ENCODE measurements at regions of chr18 and their contacts with region 1.

Region 1: DNA sequence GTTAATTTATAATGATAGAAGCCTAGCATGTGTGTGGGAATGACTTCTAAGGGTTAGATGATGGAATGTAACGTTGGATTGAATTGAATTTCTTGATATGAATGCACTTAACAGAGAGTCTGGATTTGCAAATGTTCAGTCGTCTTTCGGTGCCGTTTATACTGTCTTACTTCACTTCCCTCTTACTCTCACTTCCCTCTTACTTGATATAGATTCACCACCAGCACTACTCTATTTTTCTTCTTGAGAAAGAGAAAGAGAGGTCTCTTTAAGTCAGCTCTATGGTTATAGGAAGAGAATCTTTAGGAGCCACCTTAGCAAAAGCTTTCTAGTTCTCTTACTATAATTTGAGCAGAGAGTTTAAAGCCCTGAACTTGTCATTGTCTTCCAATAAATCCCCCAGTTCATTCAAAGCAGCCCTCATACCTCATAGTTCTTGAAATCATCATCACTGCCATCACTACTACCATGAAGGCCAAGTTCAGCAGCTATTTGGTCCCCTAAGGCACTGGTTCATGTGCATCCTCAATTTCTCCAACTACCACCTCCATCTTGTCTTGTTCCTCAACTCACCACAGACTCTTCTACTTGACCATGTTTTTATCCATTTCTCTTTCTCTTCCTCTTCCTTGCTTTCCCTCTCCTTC is 501.7 kb upstream of the TCF4 start:
- DNase-seq: no peak
- ATAC-seq: no peak
- H3K4me3 ChIP-seq: no peak overlapping the region
- H3K4me3 Mint-ChIP-seq: no peak overlapping the region
- H3K27ac ChIP-seq: no peak overlapping the region
- H3K27ac Mint-ChIP-seq: no peak overlapping the region
- H3K4me1 ChIP-seq: no peaks in the 10 kb centered on the region
- H3K4me1 Mint-ChIP-seq: no peaks in the 10 kb centered on the region
- H3K27me3 ChIP-seq: no peaks in the 10 kb centered on the region
- H3K27me3 Mint-ChIP-seq: peaks cover 0 to 7% of the 10 kb centered on the region in 2 donors

Region 2: DNA sequence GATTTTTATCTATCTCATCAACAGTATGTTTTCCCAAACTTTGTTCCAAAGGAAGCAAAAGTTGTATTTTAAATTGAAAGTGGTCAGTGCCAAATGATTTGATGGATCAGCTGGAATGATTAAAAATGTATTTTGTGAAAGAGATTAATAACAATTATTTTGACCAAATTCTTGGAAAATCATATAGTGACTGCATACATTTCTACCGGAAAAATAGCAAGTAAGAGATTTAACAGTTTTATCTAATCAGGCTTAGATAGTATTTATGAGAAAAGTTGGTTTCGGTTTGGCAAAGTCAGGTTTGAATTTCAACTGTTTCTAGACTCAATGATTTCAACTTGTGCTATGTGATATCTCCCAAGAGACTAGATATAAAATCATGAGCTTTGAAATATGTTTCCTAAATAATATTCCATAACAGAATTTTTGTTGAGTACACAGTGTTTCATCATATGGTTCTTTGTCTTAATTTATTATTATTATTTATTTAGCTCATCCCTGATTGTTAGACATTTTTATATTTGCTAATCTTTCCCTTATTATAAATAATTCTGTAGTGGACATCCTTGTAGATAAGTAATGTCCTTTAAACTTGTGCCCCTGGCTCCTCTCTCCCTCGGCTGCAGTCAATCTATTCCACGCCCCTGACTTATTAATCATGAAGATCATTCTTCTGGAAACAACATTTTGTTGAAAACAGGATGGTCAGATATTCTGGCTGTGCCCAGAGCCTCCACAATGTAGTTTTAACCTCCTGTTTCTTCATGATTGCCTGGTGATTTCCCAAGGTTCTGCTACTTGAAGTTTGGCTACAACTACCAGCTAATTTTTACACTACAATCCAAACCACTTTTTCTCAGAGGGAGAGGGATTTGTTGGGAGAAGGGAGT is 19.0 kb after region 1 on chr18:
- CTCF ChIA-PET with region 1: interaction called in 1 of 2 experiments, 12 read pairs
- POLR2A ChIA-PET with region 1: interaction called in 1 of 2 experiments, 3 read pairs
- DNase-seq: no peak
- ATAC-seq: no peak
- H3K4me3 ChIP-seq: no peak overlapping the region
- H3K4me3 Mint-ChIP-seq: no peak overlapping the region
- H3K27ac ChIP-seq: no peak overlapping the region
- H3K27ac Mint-ChIP-seq: no peak overlapping the region
- H3K4me1 ChIP-seq: no peaks in the 10 kb centered on the region
- H3K4me1 Mint-ChIP-seq: peaks cover 0 to 2% (median 0%) of the 10 kb centered on the region in 3 donors
- H3K27me3 ChIP-seq: no peaks in the 10 kb centered on the region
- H3K27me3 Mint-ChIP-seq: no peaks in the 10 kb centered on the region

Measured in T-cell (primary cell).